ENCODE measurements at regions of chr12 and their contacts with region 1.

Region 1: GRCh38 chr12:121550974-121551634 is 29.7 kb downstream of the KDM2B start:
- DNase-seq: no peak
- ATAC-seq: peak; percentile 23
- H3K4me3 ChIP-seq: no peak overlapping the region
- H3K27ac ChIP-seq: no peak overlapping the region
- H3K4me1 ChIP-seq: peaks cover 25% of the 10 kb centered on the region
- H3K27me3 ChIP-seq: no peaks in the 10 kb centered on the region
- CTCF ChIP-seq: no peak
- EP300 ChIP-seq: no peak
- POLR2A ChIP-seq: no peak
- RAD21 ChIP-seq: no peak

Region 2: DNA sequence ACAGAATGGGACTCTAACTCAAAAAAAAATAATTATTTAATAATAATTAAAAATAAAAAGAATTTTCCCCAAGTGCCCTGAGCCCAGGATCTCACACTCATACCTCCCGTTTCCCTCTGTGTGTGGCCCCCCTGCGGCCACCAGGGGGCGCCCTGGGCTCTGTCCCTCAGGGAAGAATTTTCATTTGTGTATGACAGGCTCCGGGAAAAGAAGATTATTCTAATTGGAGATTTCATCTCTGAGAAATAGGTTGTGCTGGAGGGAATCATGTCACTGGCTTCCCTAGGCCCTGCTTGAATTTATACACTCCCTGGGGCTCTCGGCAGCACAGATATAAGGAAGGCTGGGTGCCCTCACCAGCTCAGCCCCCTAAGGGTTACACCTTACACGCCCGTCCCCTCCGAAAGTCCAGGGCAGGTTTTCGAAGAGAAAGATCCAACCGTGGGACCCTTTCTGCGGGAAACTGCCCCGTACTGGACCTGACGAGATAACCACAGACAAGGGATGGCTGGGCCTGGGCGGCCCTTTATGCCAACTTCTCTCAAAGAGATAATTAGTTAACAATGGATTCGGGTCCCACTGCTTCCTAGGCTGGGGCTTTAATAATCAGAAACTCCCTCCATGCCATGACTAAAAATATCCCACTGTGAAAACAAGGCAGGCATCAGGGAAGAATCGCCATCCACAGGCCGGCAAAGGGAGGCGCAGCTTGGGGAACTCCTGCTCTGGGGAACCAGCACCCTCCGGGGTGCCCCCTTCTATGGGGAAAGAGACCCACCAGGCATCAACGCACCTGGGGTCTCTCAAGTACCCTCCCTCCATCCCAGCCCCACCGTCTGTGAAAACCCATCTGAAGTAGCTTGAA is 50.9 kb before region 1 on chr12:
- CTCF ChIA-PET with region 1: interaction called, 34 read pairs
- POLR2A ChIA-PET with region 1: interaction called, 5 read pairs
- RAD21 ChIA-PET with region 1: interaction called, 13 read pairs
- SMC1A ChIA-PET with region 1: interaction called, 22 read pairs
- in situ Hi-C with region 1: no loop called
- intact Hi-C with region 1: loop called (anchors 5 kb)
- DNase-seq: no peak
- ATAC-seq: peak; percentile 94
- H3K4me3 ChIP-seq: no peak overlapping the region
- H3K27ac ChIP-seq: no peak overlapping the region
- H3K4me1 ChIP-seq: no peaks in the 10 kb centered on the region
- H3K27me3 ChIP-seq: no peaks in the 10 kb centered on the region
- CTCF ChIP-seq: peak; percentile 85 to 96 (median 91)
- EP300 ChIP-seq: no peak
- POLR2A ChIP-seq: no peak
- RAD21 ChIP-seq: peak; percentile 92

Region 3: GRCh38 chr12:121568971-121569751 is 18.1 kb after region 1 on chr12:
- CTCF ChIA-PET with region 1: interaction called, 5 read pairs
- POLR2A ChIA-PET with region 1: no interaction called
- RAD21 ChIA-PET with region 1: interaction called, 3 read pairs
- SMC1A ChIA-PET with region 1: interaction called, 46 read pairs
- in situ Hi-C with region 1: no loop called
- intact Hi-C with region 1: no loop called
- DNase-seq: no peak
- ATAC-seq: peak; percentile 71
- H3K4me3 ChIP-seq: no peak overlapping the region
- H3K27ac ChIP-seq: no peak overlapping the region
- H3K4me1 ChIP-seq: no peaks in the 10 kb centered on the region
- H3K27me3 ChIP-seq: no peaks in the 10 kb centered on the region
- CTCF ChIP-seq: no peak
- EP300 ChIP-seq: no peak
- POLR2A ChIP-seq: no peak
- RAD21 ChIP-seq: no peak

Region 4: DNA sequence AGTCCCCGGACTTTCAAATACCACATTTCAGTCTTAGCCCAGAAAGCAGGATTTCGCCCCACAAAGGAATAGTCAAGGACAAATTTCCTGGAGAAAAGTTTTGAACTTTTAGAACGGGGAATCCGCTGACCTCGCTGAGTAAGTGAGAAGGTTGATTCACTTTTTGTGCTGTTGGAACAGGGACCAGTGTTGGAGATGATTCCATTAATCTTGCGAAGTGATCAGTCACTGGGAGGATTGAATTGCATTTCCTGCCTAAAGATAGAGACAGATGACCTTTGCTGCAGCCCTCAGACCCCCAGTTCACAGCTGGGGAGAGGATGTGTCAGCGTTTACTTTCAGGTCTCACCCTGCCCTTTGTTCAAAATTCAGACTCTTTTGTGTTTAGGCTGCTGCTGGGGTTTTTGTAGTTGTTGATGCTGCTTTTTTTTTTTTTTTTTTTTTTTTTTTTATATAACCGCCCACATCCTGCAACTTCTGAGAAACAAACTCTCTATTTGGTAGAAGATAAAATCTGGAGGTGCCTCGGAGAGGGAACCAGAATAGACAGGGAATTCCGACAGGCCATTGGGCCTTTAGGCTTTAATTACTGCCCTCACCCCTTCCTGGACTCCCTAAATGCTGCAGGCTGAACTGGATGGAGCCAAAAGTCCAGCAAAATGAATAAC is 39.5 kb after region 1 on chr12:
- CTCF ChIA-PET with region 1: interaction called, 4 read pairs
- POLR2A ChIA-PET with region 1: interaction called, 4 read pairs
- RAD21 ChIA-PET with region 1: interaction called, 4 read pairs
- SMC1A ChIA-PET with region 1: interaction called, 15 read pairs
- in situ Hi-C with region 1: no loop called
- intact Hi-C with region 1: no loop called
- DNase-seq: peak; percentile 74
- ATAC-seq: peak; percentile 91
- H3K4me3 ChIP-seq: peak overlapping the region; percentile 61
- H3K27ac ChIP-seq: peak overlapping the region; percentile 82
- H3K4me1 ChIP-seq: peaks cover 10% of the 10 kb centered on the region
- H3K27me3 ChIP-seq: no peaks in the 10 kb centered on the region
- CTCF ChIP-seq: no peak
- EP300 ChIP-seq: peak in 1 of 2 experiments; percentile 62; a peak in 1 of 4 replicates
- POLR2A ChIP-seq: peak; percentile 63
- RAD21 ChIP-seq: no peak

Region 5: DNA sequence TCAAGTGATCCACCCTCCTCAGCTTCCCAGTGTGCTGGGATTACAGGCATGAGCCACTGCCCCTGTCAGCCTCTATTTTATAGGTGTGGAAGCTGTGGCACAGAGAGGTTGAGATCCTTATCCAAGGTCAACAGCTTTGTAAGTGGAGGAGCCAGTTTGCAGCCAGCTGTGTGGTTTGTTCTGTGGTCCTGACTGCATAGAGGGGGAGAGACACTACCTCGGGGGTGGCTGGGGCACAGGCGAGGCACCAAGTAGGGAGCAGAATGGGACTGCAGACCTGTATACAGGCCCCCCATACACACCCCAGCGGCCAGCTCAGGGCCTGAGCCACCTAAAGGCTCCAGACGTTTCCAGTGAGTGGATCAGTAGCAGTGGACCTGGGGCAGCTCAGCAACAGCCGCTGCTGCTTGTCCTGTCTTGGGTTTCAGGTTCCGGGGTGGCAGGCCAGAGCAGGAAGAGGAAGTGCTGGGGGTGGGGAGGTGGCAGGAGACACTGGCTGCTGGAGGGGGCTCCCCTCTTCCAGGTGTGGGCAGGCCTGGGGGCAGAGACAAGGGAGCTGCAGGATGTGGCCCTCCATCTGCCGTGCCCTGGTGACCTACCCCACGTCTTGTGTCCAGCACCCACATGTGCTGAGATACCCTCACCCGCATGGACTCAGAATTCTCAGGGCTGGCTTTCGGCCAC is 86.3 kb after region 1 on chr12:
- CTCF ChIA-PET with region 1: interaction called, 5 read pairs
- POLR2A ChIA-PET with region 1: interaction called, 3 read pairs
- RAD21 ChIA-PET with region 1: no interaction called
- SMC1A ChIA-PET with region 1: interaction called, 10 read pairs
- in situ Hi-C with region 1: no loop called
- intact Hi-C with region 1: no loop called
- DNase-seq: no peak
- ATAC-seq: peak; percentile 90
- H3K4me3 ChIP-seq: 0 out of 2 replicates have a peak overlapping the region, but pooled peaks have one; percentile 17
- H3K27ac ChIP-seq: peak overlapping the region; percentile 84
- H3K4me1 ChIP-seq: peaks cover 20% of the 10 kb centered on the region
- H3K27me3 ChIP-seq: no peaks in the 10 kb centered on the region
- CTCF ChIP-seq: no peak
- EP300 ChIP-seq: no peak
- POLR2A ChIP-seq: peak; percentile 71
- RAD21 ChIP-seq: no peak

Region 6: GRCh38 chr12:121668750-121669520 is 117.8 kb after region 1 on chr12:
- CTCF ChIA-PET with region 1: interaction called, 76 read pairs
- POLR2A ChIA-PET with region 1: interaction called, 6 read pairs
- RAD21 ChIA-PET with region 1: interaction called, 42 read pairs
- SMC1A ChIA-PET with region 1: interaction called, 55 read pairs
- in situ Hi-C with region 1: loop called (anchors 5 kb)
- intact Hi-C with region 1: loop called (anchors 5 kb)
- DNase-seq: no peak
- ATAC-seq: no peak
- H3K4me3 ChIP-seq: no peak overlapping the region
- H3K27ac ChIP-seq: no peak overlapping the region
- H3K4me1 ChIP-seq: peaks cover 15% of the 10 kb centered on the region
- H3K27me3 ChIP-seq: no peaks in the 10 kb centered on the region
- CTCF ChIP-seq: peak; percentile 58 to 71 (median 59)
- EP300 ChIP-seq: no peak
- POLR2A ChIP-seq: no peak
- RAD21 ChIP-seq: peak; percentile 73

Region 7: GRCh38 chr12:121688966-121689365 is 137.9 kb after region 1 on chr12:
- CTCF ChIA-PET with region 1: interaction called, 18 read pairs
- POLR2A ChIA-PET with region 1: interaction called, 10 read pairs
- RAD21 ChIA-PET with region 1: interaction called, 18 read pairs
- SMC1A ChIA-PET with region 1: interaction called, 5 read pairs
- in situ Hi-C with region 1: no loop called
- intact Hi-C with region 1: loop called (anchors 5 kb)
- DNase-seq: no peak
- ATAC-seq: no peak
- H3K4me3 ChIP-seq: no peak overlapping the region
- H3K27ac ChIP-seq: no peak overlapping the region
- H3K4me1 ChIP-seq: no peaks in the 10 kb centered on the region; the same call in 1 of the 2 replicates
- H3K27me3 ChIP-seq: no peaks in the 10 kb centered on the region
- CTCF ChIP-seq: no peak
- EP300 ChIP-seq: no peak
- POLR2A ChIP-seq: no peak
- RAD21 ChIP-seq: no peak

Measured in GM12878 (cell line).